Motor neuron (in vitro differentiated cells): ENCODE measurements at regions of chr16 and their contacts with region 1.

Region 1: GRCh38 chr16:18801197-18801972 is at the start of gene ARL6IP1:
- ATAC-seq: peak; percentile 89 to 97 (median 95)
- H3K4me3 ChIP-seq: peak within 1 kb of the TSS; percentile 57 to 95 (median 75)
- H3K27ac ChIP-seq: peak within 1 kb of the TSS; percentile 72 to 78
- H3K4me1 ChIP-seq: peaks cover 5 to 27% of the 10 kb centered on the region in 2 donors
- total RNA-seq, gene ARL6IP1: 90.6 to 355 (median 150) TPM

Region 2: DNA sequence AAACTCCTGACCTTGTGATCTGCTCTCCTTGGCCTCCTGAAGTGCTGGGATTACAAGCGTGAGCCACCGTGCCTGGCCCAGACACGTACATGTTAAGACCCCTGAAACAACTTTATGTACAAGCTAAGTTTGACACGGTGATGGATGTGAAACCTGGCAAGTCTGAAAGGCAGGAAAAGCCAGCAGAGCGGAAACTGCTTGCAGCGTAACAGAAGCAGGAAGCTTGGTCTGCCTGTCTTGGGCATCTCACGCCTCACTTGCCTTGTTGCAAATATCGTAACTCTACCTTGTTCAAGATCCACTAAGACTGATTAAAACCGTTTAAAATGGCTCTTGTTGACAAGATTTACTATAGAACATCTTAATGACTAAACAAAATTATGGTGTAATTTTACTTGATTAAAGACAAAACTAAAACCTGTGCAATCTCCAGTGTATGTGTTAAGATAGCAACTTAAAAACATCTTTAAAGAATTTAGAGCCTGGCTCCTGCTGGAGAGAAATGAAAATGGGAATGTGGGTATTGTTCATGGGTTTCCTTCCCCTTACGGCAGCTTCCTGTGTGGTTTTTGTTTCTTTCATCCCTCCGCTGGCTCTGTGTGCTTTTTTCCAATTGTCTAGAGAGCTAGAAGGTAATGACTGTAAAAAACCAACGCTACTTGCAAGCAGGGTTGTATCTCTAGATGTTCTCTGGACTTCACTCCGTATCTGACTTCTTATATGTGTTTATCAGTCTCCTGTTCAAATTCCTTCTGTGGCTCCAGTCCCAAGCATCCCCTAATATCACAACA is 1808.2 kb before region 1 on chr16:
- in situ Hi-C with region 1: no loop called
- ATAC-seq: no peak
- H3K4me3 ChIP-seq: no peak overlapping the region
- H3K27ac ChIP-seq: no peak overlapping the region
- H3K4me1 ChIP-seq: no peaks in the 10 kb centered on the region

Region 3: GRCh38 chr16:18969050-18969854 is 167.9 kb after region 1 on chr16:
- in situ Hi-C with region 1: loop called in 1 of 9 experiments (anchors 25 kb)
- ATAC-seq: peak; percentile 93 to 99 (median 98)
- H3K4me3 ChIP-seq: peak overlapping the region; percentile 16 to 37 (median 21)
- H3K27ac ChIP-seq: no peak overlapping the region
- H3K4me1 ChIP-seq: no peaks in the 10 kb centered on the region

Region 4: GRCh38 chr16:19254611-19255010 is 453.2 kb after region 1 on chr16:
- in situ Hi-C with region 1: no loop called
- ATAC-seq: no peak
- H3K4me3 ChIP-seq: no peak overlapping the region
- H3K27ac ChIP-seq: no peak overlapping the region
- H3K4me1 ChIP-seq: no peaks in the 10 kb centered on the region